AG04449 (cell line): ENCODE measurements at regions of chr1 and their contacts with region 1.

Region 1: DNA sequence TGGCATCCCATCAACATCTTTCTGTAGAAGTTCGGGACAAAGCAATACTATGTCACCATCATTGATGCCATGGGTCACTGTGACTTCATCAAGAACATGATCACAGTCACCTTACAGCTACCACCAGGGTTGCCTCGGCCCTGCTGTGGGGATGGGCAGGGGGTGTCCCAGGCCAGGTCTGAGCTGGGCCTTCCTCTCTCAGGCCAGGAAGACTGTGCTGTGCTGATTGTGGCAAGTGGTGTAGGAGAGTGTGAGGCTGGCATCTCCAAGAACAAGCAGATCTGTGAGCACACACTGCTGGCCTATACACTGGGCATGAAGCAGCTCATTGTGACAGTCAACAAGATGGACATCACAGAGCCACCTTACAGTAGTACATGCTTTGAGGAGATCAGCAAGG is 20.9 kb upstream of the RPL11 start:
- DNase-seq: no peak
- H3K4me3 ChIP-seq: no peak overlapping the region
- CTCF ChIP-seq: no peak

Region 2: DNA sequence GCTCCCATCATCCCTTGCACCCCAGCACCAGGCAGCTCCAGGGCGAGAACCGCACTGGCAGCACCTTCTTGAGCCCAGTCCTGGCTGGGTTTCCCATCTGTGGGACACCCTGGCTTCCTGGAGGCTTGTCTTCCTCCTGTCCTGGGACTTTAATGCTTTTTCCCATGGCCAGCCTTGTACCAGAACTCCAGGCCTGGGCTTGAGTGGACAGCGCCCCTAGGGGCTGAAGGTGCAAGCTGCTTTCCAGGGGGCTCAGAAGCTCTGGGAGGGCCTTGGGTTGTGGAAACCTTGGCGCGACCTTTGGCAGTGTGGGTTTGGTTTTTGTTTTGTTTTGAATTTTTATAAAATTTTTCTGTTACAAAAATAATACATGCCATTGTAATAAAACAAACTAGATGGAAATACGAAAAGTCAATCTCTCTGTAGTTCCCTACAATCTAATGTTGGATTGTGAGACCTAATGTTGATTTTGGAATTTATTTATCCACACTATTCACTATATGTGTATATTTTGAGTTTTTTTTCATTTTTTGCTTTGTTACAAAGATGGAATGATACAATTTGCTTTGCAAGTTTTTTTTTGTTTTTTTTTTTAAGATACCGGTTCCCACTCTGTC is 12.9 kb before region 1 on chr1:
- CTCF ChIA-PET with region 1: interaction called, 28 read pairs
- POLR2A ChIA-PET with region 1: no interaction called
- DNase-seq: no peak
- H3K4me3 ChIP-seq: no peak overlapping the region
- CTCF ChIP-seq: peak; percentile 90